GM12878 (cell line): ENCODE measurements at regions of chr20 and their contacts with region 1.

Region 1: DNA sequence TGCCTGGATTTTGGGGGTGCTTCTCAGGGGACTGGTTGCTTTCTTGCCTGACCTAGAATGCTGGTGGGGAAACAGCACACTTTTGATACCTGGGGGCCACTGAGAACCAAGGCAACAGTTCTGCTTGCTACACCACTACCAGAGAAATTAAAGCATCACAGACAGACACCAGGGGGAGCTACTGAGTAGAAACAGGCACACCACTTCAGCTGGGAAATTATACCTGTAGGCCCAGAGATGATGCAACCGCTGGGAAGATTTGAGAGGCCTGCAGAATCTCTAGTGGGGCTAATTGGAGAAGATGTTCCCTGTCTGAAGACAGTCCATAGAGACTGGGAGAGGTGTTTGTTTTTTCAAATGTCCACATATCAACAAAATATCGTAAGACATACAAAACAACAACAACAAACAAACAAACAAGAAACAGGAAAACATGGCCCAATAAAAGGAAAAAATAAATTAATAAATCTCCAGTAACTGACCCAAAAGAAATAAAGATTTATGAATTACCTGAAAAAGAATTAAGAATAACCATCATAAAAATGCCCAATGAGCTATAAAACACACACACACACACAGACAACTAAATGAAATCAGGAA is 129.4 kb upstream of the RIN2 start:
- DNase-seq: peak; percentile 26
- ATAC-seq: peak; percentile 93
- H3K4me3 ChIP-seq: no peak overlapping the region
- H3K27ac ChIP-seq: no peak overlapping the region
- H3K4me1 ChIP-seq: no peaks in the 10 kb centered on the region
- H3K27me3 ChIP-seq: no peaks in the 10 kb centered on the region
- CTCF ChIP-seq: peak; percentile 62 to 76 (median 63)
- EP300 ChIP-seq: no peak
- POLR2A ChIP-seq: no peak
- RAD21 ChIP-seq: peak; percentile 67

Region 2: DNA sequence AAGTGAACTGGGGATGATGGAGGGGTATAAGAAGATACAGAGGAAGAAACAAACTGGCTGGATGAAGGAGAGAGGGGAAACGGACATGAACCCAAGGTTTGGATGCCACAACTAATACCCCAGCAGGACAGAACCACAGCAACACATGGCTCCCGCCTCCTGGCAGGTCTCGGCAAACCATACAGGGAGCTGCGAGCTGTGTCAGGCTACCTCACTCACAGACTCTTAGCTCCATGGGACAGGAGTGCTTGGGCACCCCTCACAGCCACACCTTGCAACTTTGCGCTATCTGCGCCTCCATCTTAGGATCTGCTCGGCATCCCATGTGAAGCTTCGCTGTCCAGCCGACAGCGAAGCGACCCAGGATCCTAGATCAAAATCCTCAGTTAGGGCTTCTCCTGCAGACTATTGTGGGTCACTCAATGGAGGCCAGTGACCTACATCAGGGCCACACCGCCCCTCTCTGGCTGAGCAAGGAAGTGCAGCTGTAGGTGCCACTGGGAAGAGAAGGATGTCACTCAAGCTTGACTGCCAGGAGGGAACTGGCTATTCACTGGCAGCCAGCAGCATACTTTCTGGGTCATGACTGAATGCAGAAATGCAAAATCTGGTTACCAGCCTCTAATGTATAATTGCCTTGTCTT is 45.0 kb before region 1 on chr20:
- CTCF ChIA-PET with region 1: interaction called, 10 read pairs
- POLR2A ChIA-PET with region 1: no interaction called
- RAD21 ChIA-PET with region 1: interaction called, 4 read pairs
- SMC1A ChIA-PET with region 1: interaction called, 3 read pairs
- in situ Hi-C with region 1: no loop called
- intact Hi-C with region 1: no loop called
- DNase-seq: no peak
- ATAC-seq: peak; percentile 87
- H3K4me3 ChIP-seq: no peak overlapping the region
- H3K27ac ChIP-seq: no peak overlapping the region
- H3K4me1 ChIP-seq: no peaks in the 10 kb centered on the region
- H3K27me3 ChIP-seq: no peaks in the 10 kb centered on the region; a peak in 2 of 4 replicates
- CTCF ChIP-seq: peak; percentile 70 to 87 (median 73)
- EP300 ChIP-seq: no peak
- POLR2A ChIP-seq: no peak
- RAD21 ChIP-seq: peak; percentile 95

Region 3: GRCh38 chr20:19644085-19644484 is 15.4 kb after region 1 on chr20:
- CTCF ChIA-PET with region 1: interaction called, 48 read pairs
- POLR2A ChIA-PET with region 1: no interaction called
- RAD21 ChIA-PET with region 1: interaction called, 3 read pairs
- SMC1A ChIA-PET with region 1: interaction called, 17 read pairs
- in situ Hi-C with region 1: no loop called
- intact Hi-C with region 1: no loop called
- DNase-seq: no peak
- ATAC-seq: peak; percentile 42; the same call in 2 of the 3 replicates
- H3K4me3 ChIP-seq: no peak overlapping the region
- H3K27ac ChIP-seq: no peak overlapping the region
- H3K4me1 ChIP-seq: no peaks in the 10 kb centered on the region
- H3K27me3 ChIP-seq: no peaks in the 10 kb centered on the region
- CTCF ChIP-seq: no peak
- EP300 ChIP-seq: no peak
- POLR2A ChIP-seq: no peak
- RAD21 ChIP-seq: no peak